ENCODE measurements at regions of chr1 and their contacts with region 1.

Region 1: DNA sequence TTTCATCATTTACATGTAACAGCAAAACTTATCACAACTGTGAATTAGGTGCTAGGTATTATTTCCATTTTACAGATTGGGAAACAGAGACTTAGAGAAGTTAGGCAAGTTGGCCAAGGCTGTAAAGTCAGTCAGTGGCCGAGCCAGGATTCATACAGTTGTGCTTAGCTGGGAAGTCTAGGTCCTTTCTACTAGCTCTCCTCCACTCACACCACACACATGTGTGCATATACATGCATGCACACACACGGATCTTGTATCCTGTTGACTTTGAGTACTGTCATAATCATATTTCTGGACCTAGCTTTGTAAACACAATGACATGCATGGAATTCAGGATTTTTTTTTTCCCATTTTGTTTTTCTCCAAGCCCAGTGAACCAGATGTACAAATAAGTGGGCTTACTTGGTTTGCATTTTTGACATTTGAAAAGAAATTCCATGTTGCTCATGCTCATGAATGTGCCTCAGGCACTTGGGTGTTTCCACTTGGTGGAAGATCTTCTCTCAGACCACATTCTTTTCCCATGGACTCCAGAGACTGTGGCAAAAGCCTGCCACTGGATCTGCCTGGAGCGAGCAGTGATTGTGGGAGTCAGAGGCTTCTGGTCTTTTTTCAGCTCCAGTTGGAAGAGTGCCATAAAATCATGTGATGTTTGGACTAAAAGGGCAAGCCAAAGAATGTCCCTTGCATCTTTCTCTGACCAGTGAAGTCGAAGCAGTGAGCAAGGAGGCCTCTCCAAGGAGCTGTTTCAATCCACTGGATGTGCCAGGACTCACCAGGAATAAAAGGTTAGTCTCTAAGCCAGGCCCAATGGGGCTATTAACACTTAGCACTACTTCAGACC is 61.6 kb upstream of the DNAJC6 start:
- DNase-seq: peak in 1 of 2 donors; percentile 61
- ATAC-seq: peak; percentile 52 to 87 (median 74)
- H3K4me3 ChIP-seq: no peak overlapping the region
- H3K27ac ChIP-seq: peak overlapping the region in 5 of 10 donors; percentile 1 to 55 (median 31)
- H3K4me1 ChIP-seq: peaks cover 0 to 14% (median 9%) of the 10 kb centered on the region in 9 donors
- H3K27me3 ChIP-seq: peaks cover 0 to 6% (median 0%) of the 10 kb centered on the region in 7 donors
- CTCF ChIP-seq: no peak

Region 2: DNA sequence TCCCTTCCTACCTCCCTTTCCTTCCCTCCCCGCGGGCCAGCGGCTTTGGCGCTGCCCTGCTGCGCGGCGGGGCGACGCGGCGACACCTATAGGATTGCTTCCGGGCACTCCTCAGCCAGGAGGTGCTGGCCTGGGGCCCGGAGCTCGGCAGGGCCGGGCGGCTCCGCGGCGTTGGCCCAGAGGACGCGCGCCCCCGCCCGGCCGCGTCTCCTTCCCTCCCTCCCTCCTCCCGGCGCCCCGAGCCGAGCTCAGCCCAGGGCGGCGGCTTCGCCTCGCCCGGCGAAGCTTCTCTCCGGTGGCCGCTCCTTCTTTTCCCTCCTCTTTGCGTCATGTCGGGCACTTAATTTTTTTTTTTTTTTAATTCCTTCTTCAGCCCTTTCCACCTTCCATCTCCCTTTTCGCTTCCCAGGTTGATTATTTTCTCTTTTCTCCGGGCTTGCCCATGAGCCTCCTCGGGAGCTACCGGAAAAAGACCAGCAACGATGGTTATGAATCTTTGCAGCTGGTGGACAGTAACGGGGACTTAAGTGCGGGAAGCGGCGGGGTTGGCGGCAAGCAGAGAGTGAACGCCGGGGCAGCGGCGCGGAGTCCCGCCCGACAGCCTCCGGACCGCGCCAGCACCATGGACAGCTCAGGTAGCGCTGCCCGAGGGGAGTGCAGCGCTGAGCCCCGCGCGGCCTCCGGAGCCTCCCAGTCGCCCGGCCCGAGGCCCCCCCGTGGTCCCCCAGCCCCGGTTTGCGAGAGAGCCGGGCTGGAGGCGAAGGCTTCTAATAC is 61.8 kb after region 1 on chr1 and contains the start of gene DNAJC6:
- intact Hi-C with region 1: loop called in 1 of 10 experiments (anchors 5 kb)
- DNase-seq: peak; percentile 70 to 73
- ATAC-seq: peak; percentile 97 to 99 (median 98)
- H3K4me3 ChIP-seq: peak within 1 kb of the TSS; percentile 6 to 55 (median 48)
- H3K27ac ChIP-seq: no peak within 1 kb of the TSS
- H3K4me1 ChIP-seq: peaks cover 0 to 17% (median 10%) of the 10 kb centered on the region in 9 donors
- H3K27me3 ChIP-seq: peaks cover 0 to 49% (median 24%) of the 10 kb centered on the region in 7 donors
- CTCF ChIP-seq: no peak
- total RNA-seq, gene DNAJC6: 3.0 to 10.5 (median 6.2) TPM

Region 3: DNA sequence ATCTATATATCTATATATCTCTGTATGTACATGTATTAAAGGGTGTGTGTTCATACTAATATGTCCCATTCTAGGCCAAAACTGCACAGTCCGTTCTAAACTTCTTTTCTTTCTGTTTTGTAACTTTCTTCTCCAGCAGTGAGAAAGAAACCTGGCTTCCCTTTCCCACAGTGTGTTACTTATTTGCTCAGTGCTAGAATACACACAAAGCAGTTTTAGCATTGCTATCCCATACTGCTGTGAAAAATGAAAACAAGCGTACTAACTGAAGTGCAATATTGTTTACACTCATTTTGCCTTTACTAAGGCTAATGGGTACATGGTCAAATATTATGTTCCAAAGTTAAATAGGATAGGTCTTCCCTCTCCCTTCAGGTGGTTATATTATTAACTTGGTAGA is 336.7 kb after region 1 on chr1:
- intact Hi-C with region 1: no loop called
- DNase-seq: no peak
- ATAC-seq: no peak
- H3K4me3 ChIP-seq: no peak overlapping the region
- H3K27ac ChIP-seq: no peak overlapping the region
- H3K4me1 ChIP-seq: no peaks in the 10 kb centered on the region
- H3K27me3 ChIP-seq: no peaks in the 10 kb centered on the region
- CTCF ChIP-seq: no peak